Heart left ventricle (tissue), 16 donors: ENCODE measurements at regions of chr12 and their contacts with region 1.

Region 1: GRCh38 chr12:53451661-53452158 is at the start of gene PCBP2:
- DNase-seq: peak; percentile 99
- ATAC-seq: peak; percentile 97 to 98 (median 98)
- H3K4me3 ChIP-seq: peak within 1 kb of the TSS; percentile 59 to 83 (median 78)
- H3K27ac ChIP-seq: peak within 1 kb of the TSS; percentile 89 to 98 (median 96)
- H3K4me1 ChIP-seq: peaks cover 5 to 32% (median 26%) of the 10 kb centered on the region in 12 donors
- H3K27me3 ChIP-seq: no peaks in the 10 kb centered on the region
- CTCF ChIP-seq: peak; percentile 76 to 95 (median 86)
- POLR2A ChIP-seq: peak in 1 of 2 donors; percentile 72
- total RNA-seq, gene PCBP2: 293 to 642 (median 559) TPM

Region 2: DNA sequence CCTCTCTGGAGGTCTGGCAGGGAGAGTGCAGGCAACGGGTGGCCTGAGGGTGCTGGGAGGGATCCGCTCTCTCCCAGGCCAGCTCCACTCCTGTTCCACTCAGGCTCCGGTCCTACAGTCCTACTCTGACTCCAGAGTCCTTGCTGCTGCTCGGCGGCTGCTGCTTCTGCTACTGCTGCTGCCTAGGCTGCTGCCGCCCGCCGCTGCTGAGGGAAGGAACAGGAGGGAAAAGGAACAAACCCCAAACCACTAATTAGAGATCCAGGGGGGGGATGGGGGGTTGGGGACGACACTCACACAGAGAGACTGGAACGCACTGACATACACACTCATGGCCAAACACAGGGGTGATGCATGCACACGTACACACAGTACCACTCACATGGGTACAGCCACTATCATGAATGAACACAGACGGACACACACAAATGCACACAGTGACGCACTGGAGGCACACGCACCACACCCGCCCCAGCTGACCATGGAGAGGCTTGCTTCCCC is 115.5 kb before region 1 on chr12 and contains the start of gene SP7:
- intact Hi-C with region 1: no loop called
- DNase-seq: no peak
- ATAC-seq: no peak
- H3K4me3 ChIP-seq: no peak within 1 kb of the TSS
- H3K27ac ChIP-seq: no peak within 1 kb of the TSS
- H3K4me1 ChIP-seq: peaks cover 0 to 8% (median 0%) of the 10 kb centered on the region in 12 donors
- H3K27me3 ChIP-seq: peaks cover 0 to 29% (median 6%) of the 10 kb centered on the region in 9 donors
- CTCF ChIP-seq: no peak
- POLR2A ChIP-seq: no peak
- total RNA-seq, gene SP7: not detected

Region 3: DNA sequence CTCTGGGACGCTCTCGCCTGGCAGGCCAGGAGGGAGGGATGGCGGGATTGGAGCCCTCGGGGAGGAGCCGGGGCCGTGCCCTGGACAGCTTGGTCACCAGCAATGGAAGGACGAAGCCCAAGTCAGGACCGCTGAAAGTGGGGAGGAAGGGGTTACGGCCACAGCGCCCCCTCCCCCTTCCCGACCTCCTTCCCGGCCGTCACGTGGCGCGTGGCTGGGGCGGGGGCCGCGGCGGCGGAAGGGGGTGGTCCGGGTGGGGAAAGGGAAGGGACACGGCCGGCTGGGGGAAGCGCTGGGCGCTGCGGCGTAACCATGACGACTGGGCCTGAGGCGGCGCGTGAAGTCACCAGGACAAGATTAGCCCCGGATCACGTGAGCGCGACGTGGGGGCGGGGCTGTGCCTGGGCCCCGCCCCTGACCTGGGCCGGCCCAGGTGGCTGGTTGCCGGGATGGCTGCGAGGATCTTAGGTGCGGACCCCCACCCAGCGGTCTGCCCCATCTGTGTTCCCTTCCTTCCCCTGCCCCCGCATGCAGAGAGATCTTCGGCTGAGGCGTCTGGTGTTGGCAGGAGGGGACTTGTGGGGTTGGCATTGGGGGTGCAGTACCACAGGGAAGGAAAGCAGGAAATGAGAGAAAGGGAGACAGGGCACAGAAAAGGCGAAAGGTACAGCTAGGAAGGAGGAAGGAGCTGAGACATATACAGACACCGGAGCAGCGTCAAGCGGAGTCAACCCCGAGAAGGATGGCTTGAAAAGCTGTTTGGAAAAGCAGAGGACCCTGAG is 41.3 kb after region 1 on chr12:
- intact Hi-C with region 1: loop called in 3 of 10 experiments (anchors 5 kb)
- DNase-seq: peak; percentile 94
- ATAC-seq: peak; percentile 89 to 97 (median 95)
- H3K4me3 ChIP-seq: peak overlapping the region; percentile 13 to 71 (median 62)
- H3K27ac ChIP-seq: peak overlapping the region; percentile 52 to 87 (median 78)
- H3K4me1 ChIP-seq: peaks cover 0 to 39% (median 24%) of the 10 kb centered on the region in 12 donors
- H3K27me3 ChIP-seq: no peaks in the 10 kb centered on the region
- CTCF ChIP-seq: peak in 2 of 12 donors; percentile 32 to 41
- POLR2A ChIP-seq: peak in 1 of 2 donors; percentile 53

Region 4: GRCh38 chr12:53508534-53509199 is 57.0 kb after region 1 on chr12:
- intact Hi-C with region 1: loop called in 2 of 10 experiments (anchors 2 to 5 kb)
- DNase-seq: peak; percentile 83 to 88 (median 86)
- ATAC-seq: peak; percentile 75 to 90 (median 86)
- H3K4me3 ChIP-seq: no peak overlapping the region
- H3K27ac ChIP-seq: peak overlapping the region in 10 of 12 donors; percentile 9 to 74 (median 50)
- H3K4me1 ChIP-seq: peaks cover 0 to 17% (median 9%) of the 10 kb centered on the region in 12 donors
- H3K27me3 ChIP-seq: no peaks in the 10 kb centered on the region
- CTCF ChIP-seq: peak; percentile 81 to 95 (median 90)
- POLR2A ChIP-seq: peak in 1 of 2 donors; percentile 13